ENCODE measurements at regions of chr3 and their contacts with region 1.

Region 1: DNA sequence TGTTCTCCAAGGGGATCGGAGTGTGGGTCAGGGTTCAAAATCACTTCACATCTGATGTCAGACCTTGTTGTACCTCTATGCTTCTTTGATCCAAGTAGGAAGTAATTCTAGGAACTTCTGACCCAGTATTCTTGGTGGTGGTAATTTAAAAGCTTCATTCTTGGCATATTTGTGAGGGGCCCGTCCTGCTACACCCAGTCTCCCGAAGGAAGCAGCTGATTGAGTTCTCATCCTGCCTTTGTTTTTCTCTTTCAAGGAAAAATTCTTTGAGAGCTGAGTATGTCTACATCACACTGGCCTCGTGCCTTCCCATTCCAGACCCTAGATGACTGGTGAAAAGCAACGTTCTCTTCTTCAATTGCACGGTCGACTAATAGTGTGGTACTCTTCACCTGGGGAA is 234.4 kb upstream of the TPRG1 start:
- DNase-seq: no peak
- ATAC-seq: peak in 3 of 8 donors; percentile 26 to 45 (median 42)
- H3K4me3 ChIP-seq: no peak overlapping the region
- H3K27ac ChIP-seq: no peak overlapping the region
- H3K4me1 ChIP-seq: peaks cover 0 to 39% (median 10%) of the 10 kb centered on the region in 9 donors
- H3K27me3 ChIP-seq: no peaks in the 10 kb centered on the region
- CTCF ChIP-seq: no peak

Region 2: DNA sequence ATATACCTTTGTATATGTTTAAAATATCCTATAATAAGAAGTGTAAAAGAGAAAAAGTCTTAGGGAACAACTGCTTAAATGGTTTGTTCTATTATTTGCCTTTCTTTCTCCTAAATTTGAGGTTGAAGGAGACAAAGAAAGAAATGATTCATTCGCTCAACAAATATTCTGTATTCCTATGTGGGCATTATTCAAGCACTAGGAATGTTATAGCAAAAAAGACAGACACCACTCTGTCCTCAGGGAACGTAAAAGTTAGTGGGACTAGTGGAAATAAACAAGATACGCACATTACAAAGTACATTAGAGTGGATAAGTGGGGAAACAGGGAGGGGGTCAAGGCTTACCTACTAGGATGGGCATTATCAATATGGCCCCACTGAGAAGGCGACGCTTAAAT is 451.3 kb before region 1 on chr3:
- intact Hi-C with region 1: no loop called
- DNase-seq: no peak
- ATAC-seq: no peak
- H3K4me3 ChIP-seq: no peak overlapping the region
- H3K27ac ChIP-seq: no peak overlapping the region
- H3K4me1 ChIP-seq: peaks cover 0 to 22% (median 10%) of the 10 kb centered on the region in 9 donors
- H3K27me3 ChIP-seq: no peaks in the 10 kb centered on the region
- CTCF ChIP-seq: no peak

Region 3: GRCh38 chr3:188899892-188900291 is 37.5 kb before region 1 on chr3:
- intact Hi-C with region 1: loop called in 1 of 10 experiments (anchors 5 kb)
- DNase-seq: no peak
- ATAC-seq: no peak
- H3K4me3 ChIP-seq: no peak overlapping the region
- H3K27ac ChIP-seq: peak overlapping the region in 1 of 10 donors; percentile 87
- H3K4me1 ChIP-seq: peaks cover 5 to 29% (median 17%) of the 10 kb centered on the region in 9 donors
- H3K27me3 ChIP-seq: peaks cover 0 to 30% (median 0%) of the 10 kb centered on the region in 7 donors
- CTCF ChIP-seq: no peak

Region 4: GRCh38 chr3:188962253-188963247 is 25.2 kb after region 1 on chr3:
- intact Hi-C with region 1: no loop called
- DNase-seq: no peak
- ATAC-seq: peak in 5 of 8 donors; percentile 30 to 62 (median 43)
- H3K4me3 ChIP-seq: no peak overlapping the region
- H3K27ac ChIP-seq: peak overlapping the region in 2 of 10 donors; percentile 15 to 33
- H3K4me1 ChIP-seq: peaks cover 0 to 19% (median 8%) of the 10 kb centered on the region in 9 donors
- H3K27me3 ChIP-seq: no peaks in the 10 kb centered on the region
- CTCF ChIP-seq: no peak